ENCODE measurements at regions of chr10 and their contacts with region 1.

Region 1: GRCh38 chr10:31864834-31865518 is 63.7 kb downstream of the ARHGAP12 start:
- DNase-seq: no peak
- H3K4me3 ChIP-seq: no peak overlapping the region
- H3K27ac ChIP-seq: peak overlapping the region; percentile 2 to 24
- H3K4me1 ChIP-seq: peaks cover 5% of the 10 kb centered on the region
- H3K27me3 ChIP-seq: no peaks in the 10 kb centered on the region
- CTCF ChIP-seq: no peak
- POLR2A ChIP-seq: no peak

Region 2: GRCh38 chr10:31912898-31913852 is 48.2 kb after region 1 on chr10:
- intact Hi-C with region 1: no loop called
- DNase-seq: no peak
- H3K4me3 ChIP-seq: no peak overlapping the region
- H3K27ac ChIP-seq: peak overlapping the region in 1 of 2 donors; percentile 33
- H3K4me1 ChIP-seq: peaks cover 5% of the 10 kb centered on the region
- H3K27me3 ChIP-seq: no peaks in the 10 kb centered on the region
- CTCF ChIP-seq: no peak
- POLR2A ChIP-seq: no peak

Region 3: GRCh38 chr10:32005050-32005449 is 140.1 kb after region 1 on chr10:
- intact Hi-C with region 1: loop called (anchors 10 kb)
- DNase-seq: peak; percentile 10
- H3K4me3 ChIP-seq: no peak overlapping the region
- H3K27ac ChIP-seq: no peak overlapping the region
- H3K4me1 ChIP-seq: no peaks in the 10 kb centered on the region
- H3K27me3 ChIP-seq: no peaks in the 10 kb centered on the region
- CTCF ChIP-seq: peak in 3 of 4 experiments; percentile 24 to 48 (median 27)
- POLR2A ChIP-seq: no peak